Endothelial cell of umbilical vein (primary cell): ENCODE measurements at regions of chr1 and their contacts with region 1.

Region 1: GRCh38 chr1:73452522-73452921 is 745.5 kb downstream of the LRRIQ3 start:
- DNase-seq: no peak
- H3K4me3 ChIP-seq: no peak overlapping the region
- H3K27ac ChIP-seq: no peak overlapping the region
- H3K4me1 ChIP-seq: no peaks in the 10 kb centered on the region
- H3K27me3 ChIP-seq: no peaks in the 10 kb centered on the region
- CTCF ChIP-seq: no peak
- POLR2A ChIP-seq: no peak

Region 2: GRCh38 chr1:73998348-73998959 is 545.9 kb after region 1 on chr1:
- CTCF ChIA-PET with region 1: no interaction called
- POLR2A ChIA-PET with region 1: no interaction called
- dilution Hi-C with region 1: no loop called
- intact Hi-C with region 1: loop called (anchors 2 kb)
- DNase-seq: peak; percentile 38
- H3K4me3 ChIP-seq: no peak overlapping the region
- H3K27ac ChIP-seq: no peak overlapping the region
- H3K4me1 ChIP-seq: no peaks in the 10 kb centered on the region
- H3K27me3 ChIP-seq: no peaks in the 10 kb centered on the region
- CTCF ChIP-seq: peak; percentile 7 to 11
- POLR2A ChIP-seq: no peak